ENCODE measurements at regions of chr5 and their contacts with region 1.

Region 1: GRCh38 chr5:71757590-71758543 is 38.8 kb downstream of the CARTPT start:
- DNase-seq: peak; percentile 71
- ATAC-seq: peak; percentile 100
- H3K4me3 ChIP-seq: no peak overlapping the region
- H3K27ac ChIP-seq: no peak overlapping the region
- H3K4me1 ChIP-seq: no peaks in the 10 kb centered on the region
- H3K27me3 ChIP-seq: peaks cover 6% of the 10 kb centered on the region
- CTCF ChIP-seq: peak; percentile 73
- POLR2A ChIP-seq: no peak
- RAD21 ChIP-seq: peak; percentile 83

Region 2: GRCh38 chr5:71455427-71456361 is 302.2 kb before region 1 on chr5 and contains the start of gene BDP1:
- CTCF ChIA-PET with region 1: no interaction called
- POLR2A ChIA-PET with region 1: no interaction called
- dilution Hi-C with region 1: no loop called
- in situ Hi-C with region 1: no loop called
- intact Hi-C with region 1: loop called (anchors 5 kb)
- DNase-seq: peak; percentile 93
- ATAC-seq: peak; percentile 97
- H3K4me3 ChIP-seq: peak within 1 kb of the TSS; percentile 92
- H3K27ac ChIP-seq: peak within 1 kb of the TSS; percentile 92
- H3K4me1 ChIP-seq: no peaks in the 10 kb centered on the region
- H3K27me3 ChIP-seq: peaks cover 2% of the 10 kb centered on the region
- CTCF ChIP-seq: peak; percentile 33
- POLR2A ChIP-seq: peak; percentile 79; the same call in 1 of the 2 replicates
- RAD21 ChIP-seq: no peak
- total RNA-seq, gene BDP1: 14.0 and 23.1 TPM in 2 replicates

Region 3: GRCh38 chr5:71475788-71476384 is 282.0 kb before region 1 on chr5:
- CTCF ChIA-PET with region 1: interaction called, 6 read pairs
- POLR2A ChIA-PET with region 1: no interaction called
- dilution Hi-C with region 1: no loop called
- in situ Hi-C with region 1: loop called (anchors 10 kb)
- intact Hi-C with region 1: no loop called
- DNase-seq: peak; percentile 29
- ATAC-seq: peak; percentile 81; the same call in 1 of the 2 replicates
- H3K4me3 ChIP-seq: no peak overlapping the region
- H3K27ac ChIP-seq: no peak overlapping the region
- H3K4me1 ChIP-seq: no peaks in the 10 kb centered on the region
- H3K27me3 ChIP-seq: no peaks in the 10 kb centered on the region
- CTCF ChIP-seq: peak; percentile 53
- POLR2A ChIP-seq: no peak
- RAD21 ChIP-seq: 0 out of 2 replicates have a peak, but pooled peaks have one; percentile 16

Region 4: DNA sequence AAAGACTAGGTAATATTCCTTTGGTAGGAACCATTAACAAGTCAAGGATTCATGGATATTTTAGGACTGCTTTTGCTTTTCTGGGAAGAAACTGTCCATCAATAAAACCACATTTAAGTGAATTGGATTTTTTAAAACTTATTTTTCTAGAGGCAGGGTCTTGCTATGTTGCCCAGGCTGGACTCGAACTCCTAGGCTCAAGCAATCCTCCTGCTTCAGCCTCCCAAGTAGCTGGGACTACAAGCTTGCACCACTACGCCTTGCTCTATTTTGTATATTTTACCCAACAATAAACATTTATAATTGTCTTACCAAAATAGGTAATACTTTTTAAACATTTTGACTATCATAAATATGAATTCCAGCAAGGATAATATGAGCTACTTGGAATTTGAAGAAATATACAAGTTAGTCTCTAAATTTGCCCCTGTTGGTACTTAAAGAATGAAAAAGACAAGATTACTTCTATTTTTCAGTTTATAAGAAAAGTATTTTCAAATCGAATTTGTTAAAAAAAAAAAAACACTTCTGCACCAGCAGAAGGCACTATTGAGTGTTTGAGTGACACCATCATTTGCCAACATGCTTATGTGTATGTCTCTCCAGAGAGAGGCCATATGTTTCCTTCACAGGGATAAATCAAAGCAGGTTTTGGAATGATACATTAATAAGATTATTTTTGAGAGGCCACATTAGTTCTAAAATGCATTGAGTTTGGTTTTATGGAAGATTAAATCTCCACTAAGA is 98.8 kb before region 1 on chr5:
- CTCF ChIA-PET with region 1: no interaction called
- POLR2A ChIA-PET with region 1: no interaction called
- dilution Hi-C with region 1: no loop called
- in situ Hi-C with region 1: loop called (anchors 25 kb)
- intact Hi-C with region 1: no loop called
- DNase-seq: no peak
- ATAC-seq: no peak
- H3K4me3 ChIP-seq: no peak overlapping the region
- H3K27ac ChIP-seq: no peak overlapping the region
- H3K4me1 ChIP-seq: no peaks in the 10 kb centered on the region
- H3K27me3 ChIP-seq: no peaks in the 10 kb centered on the region
- CTCF ChIP-seq: no peak
- POLR2A ChIP-seq: no peak
- RAD21 ChIP-seq: no peak

Region 5: DNA sequence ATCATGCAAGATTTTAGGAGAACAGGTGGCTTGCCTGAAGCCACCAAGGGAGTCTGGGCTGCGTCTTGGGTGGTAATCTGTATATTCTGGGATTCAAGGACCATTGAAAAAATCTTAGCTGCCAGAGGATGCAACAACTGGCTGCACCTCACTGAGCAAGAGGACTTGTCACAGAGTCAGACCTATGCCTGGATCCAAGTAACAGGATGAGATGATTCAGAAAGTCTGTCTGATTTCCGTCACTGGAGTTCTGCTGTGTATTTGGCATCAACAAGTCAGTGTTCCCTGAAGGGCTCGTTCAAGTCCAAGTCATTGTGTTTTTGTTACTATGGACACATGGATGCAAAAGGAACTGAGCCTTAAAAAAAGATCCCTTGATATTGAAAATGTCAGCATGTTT is 76.6 kb before region 1 on chr5:
- CTCF ChIA-PET with region 1: no interaction called
- POLR2A ChIA-PET with region 1: no interaction called
- dilution Hi-C with region 1: no loop called
- in situ Hi-C with region 1: no loop called
- intact Hi-C with region 1: no loop called
- DNase-seq: no peak
- ATAC-seq: no peak
- H3K4me3 ChIP-seq: no peak overlapping the region
- H3K27ac ChIP-seq: no peak overlapping the region
- H3K4me1 ChIP-seq: no peaks in the 10 kb centered on the region
- H3K27me3 ChIP-seq: peaks cover 17% of the 10 kb centered on the region
- CTCF ChIP-seq: no peak
- POLR2A ChIP-seq: no peak
- RAD21 ChIP-seq: no peak

Region 6: GRCh38 chr5:71802673-71803072 is 44.8 kb after region 1 on chr5:
- CTCF ChIA-PET with region 1: no interaction called
- POLR2A ChIA-PET with region 1: no interaction called
- dilution Hi-C with region 1: no loop called
- in situ Hi-C with region 1: no loop called
- intact Hi-C with region 1: no loop called
- DNase-seq: no peak
- ATAC-seq: no peak
- H3K4me3 ChIP-seq: no peak overlapping the region
- H3K27ac ChIP-seq: no peak overlapping the region
- H3K4me1 ChIP-seq: no peaks in the 10 kb centered on the region
- H3K27me3 ChIP-seq: peaks cover 18% of the 10 kb centered on the region
- CTCF ChIP-seq: no peak
- POLR2A ChIP-seq: no peak
- RAD21 ChIP-seq: no peak

Region 7: DNA sequence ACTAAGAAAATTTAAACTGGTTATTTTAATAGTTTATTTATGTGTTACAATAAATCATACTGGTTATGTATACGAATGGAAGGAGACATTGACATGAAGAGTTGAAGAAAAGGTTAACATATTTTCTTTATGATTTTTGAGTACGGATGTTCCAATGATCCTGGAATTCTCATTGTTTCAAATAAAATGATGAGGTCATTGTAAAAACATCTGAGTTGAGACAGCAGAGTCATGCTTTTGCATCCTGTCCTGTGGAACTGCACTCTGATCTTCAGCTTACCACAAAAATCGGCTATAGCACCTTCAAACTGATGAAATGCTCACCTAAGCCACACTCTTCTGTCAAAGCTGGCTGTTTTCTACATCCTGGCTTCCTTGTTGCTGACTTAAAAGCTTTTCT is 630.1 kb after region 1 on chr5:
- CTCF ChIA-PET with region 1: no interaction called
- POLR2A ChIA-PET with region 1: no interaction called
- dilution Hi-C with region 1: no loop called
- in situ Hi-C with region 1: no loop called
- intact Hi-C with region 1: no loop called
- DNase-seq: peak; percentile 88
- ATAC-seq: peak; percentile 60
- H3K4me3 ChIP-seq: no peak overlapping the region
- H3K27ac ChIP-seq: no peak overlapping the region
- H3K4me1 ChIP-seq: peaks cover 13% of the 10 kb centered on the region
- H3K27me3 ChIP-seq: no peaks in the 10 kb centered on the region
- CTCF ChIP-seq: no peak
- POLR2A ChIP-seq: no peak
- RAD21 ChIP-seq: no peak

Region 8: GRCh38 chr5:72624641-72625236 is 866.9 kb after region 1 on chr5:
- CTCF ChIA-PET with region 1: no interaction called
- POLR2A ChIA-PET with region 1: no interaction called
- dilution Hi-C with region 1: no loop called
- in situ Hi-C with region 1: no loop called
- intact Hi-C with region 1: no loop called
- DNase-seq: peak; percentile 76
- ATAC-seq: peak; percentile 93
- H3K4me3 ChIP-seq: no peak overlapping the region
- H3K27ac ChIP-seq: peak overlapping the region; percentile 75
- H3K4me1 ChIP-seq: peaks cover 10% of the 10 kb centered on the region
- H3K27me3 ChIP-seq: no peaks in the 10 kb centered on the region
- CTCF ChIP-seq: no peak
- POLR2A ChIP-seq: no peak
- RAD21 ChIP-seq: no peak

Measured in IMR-90 (cell line).